ENCODE measurements at regions of chr13 and their contacts with region 1.

Region 1: GRCh38 chr13:52374848-52375411 is 31.0 kb downstream of the THSD1 start:
- DNase-seq: no peak
- ATAC-seq: no peak
- H3K4me3 ChIP-seq: no peak overlapping the region
- H3K27ac ChIP-seq: no peak overlapping the region
- H3K4me1 ChIP-seq: peaks cover 5% of the 10 kb centered on the region
- H3K27me3 ChIP-seq: no peaks in the 10 kb centered on the region
- CTCF ChIP-seq: no peak
- POLR2A ChIP-seq: no peak
- RAD21 ChIP-seq: no peak

Region 2: DNA sequence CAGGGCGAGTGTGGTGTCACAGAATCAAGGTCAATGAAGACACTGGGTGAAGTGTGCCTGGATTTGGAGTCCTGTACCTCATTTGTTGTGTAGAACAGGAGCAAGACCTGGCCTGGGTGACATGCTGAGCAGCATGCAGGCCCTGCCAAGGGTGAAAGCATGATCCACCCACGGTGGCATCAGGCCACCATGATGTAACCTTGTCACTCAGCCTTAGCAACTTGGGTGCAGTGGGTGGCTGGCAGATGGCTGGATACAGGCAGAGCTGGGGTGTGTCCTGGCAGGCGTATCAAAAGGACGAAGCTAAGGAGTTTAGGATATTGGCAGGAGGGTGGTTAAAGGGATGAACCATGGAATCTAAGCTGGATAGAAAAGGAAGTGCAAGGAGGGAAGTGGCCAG is 20.8 kb after region 1 on chr13:
- CTCF ChIA-PET with region 1: no interaction called
- POLR2A ChIA-PET with region 1: interaction called, 16 read pairs
- dilution Hi-C with region 1: no loop called
- in situ Hi-C with region 1: no loop called
- intact Hi-C with region 1: no loop called
- DNase-seq: no peak
- ATAC-seq: no peak
- H3K4me3 ChIP-seq: no peak overlapping the region
- H3K27ac ChIP-seq: no peak overlapping the region
- H3K4me1 ChIP-seq: no peaks in the 10 kb centered on the region
- H3K27me3 ChIP-seq: no peaks in the 10 kb centered on the region
- CTCF ChIP-seq: no peak
- POLR2A ChIP-seq: no peak
- RAD21 ChIP-seq: no peak

Measured in IMR-90 (cell line).